Activated T-helper 1 cell treated with anti-CD3 and anti-CD28 coated beads, Interleukin-12 subunit alpha, Interleukin-12 subunit beta, Interleukin-2, Interleukin-4 antibody, amounts not matched to agents 30 ng/mL and 10 ng/mL and 1 ng/mL, durations not matched to agents 14 hours and 24 hours and 36 hours (primary cell): ENCODE measurements at regions of chr16 and their contacts with region 1.

Region 1: GRCh38 chr16:78705694-78706093 is 606.2 kb downstream of the WWOX start:
- DNase-seq: peak; percentile 2
- H3K4me3 Mint-ChIP-seq: no peak overlapping the region
- H3K27ac Mint-ChIP-seq: no peak overlapping the region
- H3K4me1 Mint-ChIP-seq: peaks cover 14% of the 10 kb centered on the region
- H3K27me3 Mint-ChIP-seq: peaks cover 2% of the 10 kb centered on the region

Region 2: DNA sequence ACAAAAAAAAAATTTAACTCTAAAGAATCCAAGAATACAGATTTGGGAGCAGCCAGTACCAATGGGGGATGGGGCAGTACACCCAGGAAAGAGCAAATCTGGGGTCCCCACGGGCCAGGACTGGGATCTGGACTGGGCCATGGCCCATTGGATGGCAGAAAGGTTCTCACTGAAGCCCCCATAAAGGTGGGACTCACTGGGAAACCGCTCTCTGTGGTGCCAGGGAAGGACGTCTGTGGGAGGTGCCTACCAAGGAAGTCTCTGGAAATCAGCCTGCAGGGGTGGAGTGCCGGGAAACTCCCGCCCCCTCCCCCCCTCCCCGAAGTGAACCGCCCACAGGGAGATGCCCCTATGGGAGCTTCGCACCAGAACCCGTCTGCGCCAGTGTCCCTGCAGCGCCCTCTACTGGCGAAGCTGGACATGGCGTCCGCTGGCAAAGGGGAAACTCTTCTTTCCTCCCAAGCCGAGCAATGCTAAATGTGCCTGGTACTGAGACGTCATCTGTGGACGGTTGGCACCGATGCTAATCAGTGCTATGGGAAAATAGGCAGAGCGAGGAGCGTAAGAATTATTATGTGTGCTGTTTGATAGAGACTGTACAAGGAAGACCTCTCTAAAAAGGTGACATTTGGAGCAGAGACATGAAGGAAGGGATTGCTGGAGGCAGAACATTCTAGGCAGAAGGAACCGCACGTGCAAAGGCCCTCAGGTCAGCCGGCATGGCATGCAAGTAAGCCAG is 64.8 kb after region 1 on chr16:
- intact Hi-C with region 1: loop called (anchors 1 kb)
- DNase-seq: peak; percentile 65
- H3K4me3 Mint-ChIP-seq: peak overlapping the region; percentile 16
- H3K27ac Mint-ChIP-seq: peak overlapping the region; percentile 65
- H3K4me1 Mint-ChIP-seq: peaks cover 54% of the 10 kb centered on the region
- H3K27me3 Mint-ChIP-seq: no peaks in the 10 kb centered on the region

Region 3: GRCh38 chr16:78962457-78962929 is 256.8 kb after region 1 on chr16:
- intact Hi-C with region 1: loop called (anchors 5 kb)
- DNase-seq: no peak
- H3K4me3 Mint-ChIP-seq: no peak overlapping the region
- H3K27ac Mint-ChIP-seq: peak overlapping the region; percentile 53
- H3K4me1 Mint-ChIP-seq: peaks cover 9% of the 10 kb centered on the region
- H3K27me3 Mint-ChIP-seq: peaks cover 2% of the 10 kb centered on the region

Region 4: GRCh38 chr16:79316004-79316458 is 610.3 kb after region 1 on chr16:
- intact Hi-C with region 1: loop called (anchors 1 kb)
- DNase-seq: peak; percentile 54
- H3K4me3 Mint-ChIP-seq: peak overlapping the region; percentile 64
- H3K27ac Mint-ChIP-seq: peak overlapping the region; percentile 90
- H3K4me1 Mint-ChIP-seq: peaks cover 29% of the 10 kb centered on the region
- H3K27me3 Mint-ChIP-seq: peaks cover 10% of the 10 kb centered on the region

Region 5: GRCh38 chr16:80084685-80085084 is 1379.0 kb after region 1 on chr16:
- intact Hi-C with region 1: loop called (anchors 2 kb)
- DNase-seq: no peak
- H3K4me3 Mint-ChIP-seq: no peak overlapping the region
- H3K27ac Mint-ChIP-seq: no peak overlapping the region
- H3K4me1 Mint-ChIP-seq: no peaks in the 10 kb centered on the region
- H3K27me3 Mint-ChIP-seq: peaks cover 11% of the 10 kb centered on the region